ENCODE measurements at regions of chr6 and their contacts with region 1.

Region 1: DNA sequence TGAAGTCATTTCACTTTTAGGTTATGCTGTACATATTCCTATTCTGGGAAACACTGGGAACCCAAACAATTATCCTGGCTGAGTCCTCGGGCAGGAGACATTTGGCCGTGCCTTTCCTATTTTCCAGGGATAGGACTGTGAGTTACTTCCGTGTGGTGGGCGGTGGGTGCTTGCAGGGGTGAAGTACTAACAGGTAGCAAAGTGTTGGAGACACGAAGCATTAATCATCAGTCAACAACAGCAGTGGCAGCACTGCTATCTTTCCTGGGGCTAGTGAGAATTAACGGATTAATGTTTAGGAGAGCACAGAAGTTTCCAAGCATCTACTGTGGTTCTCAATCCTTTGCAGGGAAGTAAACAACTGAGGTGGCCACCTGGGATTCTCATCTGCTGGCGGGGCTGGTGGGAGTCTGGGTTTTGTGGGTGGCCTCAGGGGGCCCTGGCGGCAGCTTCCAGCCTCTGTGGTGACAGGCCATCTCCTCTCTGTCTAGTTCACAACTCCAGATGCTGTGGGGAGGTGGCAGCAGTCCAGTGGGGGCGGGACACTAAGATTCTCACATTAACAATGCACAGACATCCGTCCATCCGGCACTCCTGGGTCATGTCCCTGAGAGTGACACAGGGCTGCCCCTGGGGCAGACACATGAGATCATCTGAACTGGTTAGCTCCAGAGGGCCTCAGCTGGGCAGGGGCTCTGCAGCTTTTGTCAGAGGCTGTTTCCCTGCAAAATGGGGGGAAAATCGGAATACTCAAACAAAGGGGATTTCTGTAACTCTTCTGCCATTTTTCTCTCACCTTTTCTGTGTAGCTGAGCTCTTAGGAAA is 90.9 kb downstream of the GJA10 start:
- DNase-seq: peak; percentile 58 to 96 (median 89)

Region 2: DNA sequence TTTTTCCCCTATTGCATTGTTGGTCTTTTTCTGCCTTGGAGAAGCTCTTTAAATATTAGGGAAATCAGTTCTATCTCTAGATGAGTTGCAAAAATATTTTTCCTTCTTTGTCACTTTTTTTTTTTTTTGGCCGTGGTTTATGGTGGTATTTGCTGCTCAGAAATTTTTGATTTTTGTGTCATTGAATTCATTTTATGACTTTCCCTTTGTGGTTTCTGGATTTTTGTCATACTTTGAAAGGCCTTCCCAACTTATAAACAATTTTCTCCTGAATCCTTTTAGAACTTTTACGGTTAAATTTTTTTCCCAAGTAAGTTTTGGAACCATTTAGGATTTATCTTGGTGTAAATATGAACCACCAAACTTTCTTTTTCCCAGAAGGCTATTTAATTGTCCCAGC is 54.8 kb after region 1 on chr6:
- intact Hi-C with region 1: loop called (anchors 10 kb)
- DNase-seq: no peak

Region 3: GRCh38 chr6:90078513-90079289 is 93.6 kb after region 1 on chr6:
- intact Hi-C with region 1: loop called (anchors 10 kb)
- DNase-seq: no peak

Region 4: DNA sequence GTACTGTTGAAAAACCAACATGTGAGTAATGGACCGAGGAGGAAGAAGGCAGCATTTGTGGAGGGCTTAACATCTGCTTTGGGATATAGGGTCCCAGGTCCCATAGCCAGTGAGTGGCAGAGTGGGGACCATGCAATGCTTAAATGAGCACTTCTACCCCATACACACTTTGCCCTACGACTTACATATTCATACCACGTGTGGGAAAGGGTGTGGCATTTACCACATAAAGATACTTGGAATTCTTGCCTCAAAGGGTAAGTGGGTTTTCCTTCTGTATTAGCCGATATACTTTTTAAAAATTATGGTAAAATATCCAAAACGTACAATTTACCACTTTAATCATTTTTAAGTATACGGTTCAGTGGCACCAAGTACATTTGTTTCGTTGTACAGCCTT is 112.2 kb after region 1 on chr6:
- intact Hi-C with region 1: no loop called
- DNase-seq: no peak

Region 5: GRCh38 chr6:90216072-90216977 is 231.2 kb after region 1 on chr6:
- intact Hi-C with region 1: loop called (anchors 10 kb)
- DNase-seq: peak in 3 of 42 donors; percentile 11 to 23 (median 15)

Measured in head of caudate nucleus (tissue), 42 donors.